Activated CD4-positive, alpha-beta T cell treated with anti-CD3 and anti-CD28 coated beads for 36 hours (primary cell): ENCODE measurements at regions of chr3 and their contacts with region 1.

Region 1: GRCh38 chr3:198080521-198081280 is 120.7 kb downstream of the LMLN start:
- DNase-seq: peak; percentile 90
- ATAC-seq: peak; percentile 80
- H3K4me3 Mint-ChIP-seq: peak overlapping the region; percentile 85
- H3K27ac Mint-ChIP-seq: peak overlapping the region; percentile 93
- H3K4me1 Mint-ChIP-seq: peaks cover 22% of the 10 kb centered on the region
- H3K27me3 Mint-ChIP-seq: peaks cover 40% of the 10 kb centered on the region

Region 2: DNA sequence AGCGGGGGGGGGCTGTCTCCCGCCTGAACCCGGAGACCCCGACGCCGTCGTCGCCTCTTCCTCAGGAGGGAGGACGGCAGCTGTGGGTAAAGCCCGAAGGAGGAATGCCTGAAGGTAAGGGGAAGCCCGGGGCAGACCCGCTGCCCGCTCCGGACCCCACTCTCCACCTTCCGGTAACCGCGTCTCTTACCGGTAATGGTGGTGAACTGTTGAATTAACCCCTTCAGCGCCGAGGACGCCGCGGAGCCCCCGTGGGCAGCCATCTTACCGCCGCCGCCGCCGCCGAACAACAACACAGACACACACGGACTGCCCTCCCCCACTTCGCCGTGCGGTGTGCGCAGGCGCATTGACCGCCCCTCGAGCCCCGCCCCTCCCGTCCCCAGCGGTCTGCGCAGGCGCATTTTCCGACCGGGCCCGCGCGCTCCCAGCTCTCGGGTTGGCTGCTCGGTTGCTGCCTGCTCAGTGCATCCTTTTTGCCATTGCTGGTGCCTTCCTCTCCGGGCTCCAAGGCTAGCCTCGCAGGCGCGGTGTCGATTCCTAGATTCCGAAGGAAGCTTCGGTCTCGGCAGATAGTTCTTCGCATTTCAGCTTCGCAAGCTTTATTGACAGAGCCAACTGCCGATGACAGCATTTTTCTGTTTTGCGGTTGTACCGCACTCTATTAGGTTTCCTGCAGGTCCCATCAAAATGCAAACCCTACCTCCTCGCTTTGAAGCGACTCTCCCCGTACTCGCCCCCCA is 1648.4 kb before region 1 on chr3 and contains the start of gene UBXN7:
- CTCF ChIA-PET with region 1: no interaction called
- POLR2A ChIA-PET with region 1: no interaction called
- intact Hi-C with region 1: no loop called
- DNase-seq: peak; percentile 98
- ATAC-seq: peak; percentile 89
- H3K4me3 Mint-ChIP-seq: peak within 1 kb of the TSS; percentile 79
- H3K27ac Mint-ChIP-seq: peak within 1 kb of the TSS; percentile 95
- H3K4me1 Mint-ChIP-seq: peaks cover 20% of the 10 kb centered on the region
- H3K27me3 Mint-ChIP-seq: no peaks in the 10 kb centered on the region
- total RNA-seq, gene UBXN7: 67.2 to 102 TPM

Region 3: GRCh38 chr3:197949754-197950660 is 130.7 kb before region 1 on chr3 and contains the start of gene RPL35A:
- CTCF ChIA-PET with region 1: interaction called, 3 read pairs
- POLR2A ChIA-PET with region 1: interaction called, 6 read pairs
- intact Hi-C with region 1: loop called in 1 of 2 experiments (anchors 1 kb)
- DNase-seq: peak; percentile 90
- ATAC-seq: peak; percentile 89
- H3K4me3 Mint-ChIP-seq: peak within 1 kb of the TSS; percentile 87
- H3K27ac Mint-ChIP-seq: peak within 1 kb of the TSS; percentile 97
- H3K4me1 Mint-ChIP-seq: peaks cover 47% of the 10 kb centered on the region
- H3K27me3 Mint-ChIP-seq: no peaks in the 10 kb centered on the region
- total RNA-seq, gene RPL35A: 1,121 to 1,734 TPM

Region 4: DNA sequence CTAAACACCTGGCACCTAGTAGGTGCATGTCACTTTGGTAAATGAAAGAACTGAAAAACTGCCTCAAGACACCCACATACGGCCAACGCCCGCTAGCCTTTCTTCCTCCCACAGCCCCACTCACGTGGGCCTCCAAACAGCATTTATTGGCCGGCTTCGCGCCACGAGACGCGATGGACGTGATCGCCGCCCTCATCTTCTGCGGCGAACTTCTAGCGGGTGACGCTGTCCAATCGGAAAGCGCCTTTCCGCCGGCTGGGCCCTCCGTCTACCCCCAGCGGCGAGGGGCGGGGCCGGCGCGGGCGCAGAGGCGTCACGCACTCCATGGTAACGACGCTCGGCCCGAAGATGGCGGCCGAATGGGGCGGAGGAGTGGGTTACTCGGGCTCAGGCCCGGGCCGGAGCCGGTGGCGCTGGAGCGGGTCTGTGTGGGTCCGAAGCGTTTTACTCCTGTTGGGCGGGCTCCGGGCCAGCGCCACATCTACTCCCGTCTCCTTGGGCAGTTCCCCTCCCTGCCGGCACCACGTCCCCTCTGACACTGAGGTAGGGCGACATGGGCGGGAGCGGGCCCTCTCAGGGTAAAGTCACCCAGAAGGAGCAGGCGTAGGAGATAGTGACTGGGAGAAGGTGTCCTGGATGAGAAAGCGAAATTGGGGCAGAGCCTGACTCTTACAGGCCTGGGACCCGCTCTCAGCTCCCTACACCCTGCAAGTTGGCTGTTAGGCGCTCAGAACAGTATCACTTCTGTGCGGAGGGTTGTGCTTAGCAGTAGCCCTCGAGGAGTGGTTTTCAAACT is 120.6 kb before region 1 on chr3 and contains the start of gene LMLN:
- CTCF ChIA-PET with region 1: no interaction called
- POLR2A ChIA-PET with region 1: interaction called, 3 read pairs
- intact Hi-C with region 1: loop called (anchors 1 kb)
- DNase-seq: peak; percentile 98
- ATAC-seq: peak; percentile 91
- H3K4me3 Mint-ChIP-seq: peak within 1 kb of the TSS; percentile 84
- H3K27ac Mint-ChIP-seq: peak within 1 kb of the TSS; percentile 96
- H3K4me1 Mint-ChIP-seq: peaks cover 52% of the 10 kb centered on the region
- H3K27me3 Mint-ChIP-seq: no peaks in the 10 kb centered on the region
- total RNA-seq, gene LMLN: 4.3 to 7.7 TPM

Region 5: GRCh38 chr3:198046120-198046857 is 34.4 kb before region 1 on chr3:
- CTCF ChIA-PET with region 1: interaction called, 13 read pairs
- POLR2A ChIA-PET with region 1: no interaction called
- intact Hi-C with region 1: loop called (anchors 1 to 5 kb)
- DNase-seq: no peak
- ATAC-seq: no peak
- H3K4me3 Mint-ChIP-seq: no peak overlapping the region
- H3K27ac Mint-ChIP-seq: no peak overlapping the region
- H3K4me1 Mint-ChIP-seq: no peaks in the 10 kb centered on the region
- H3K27me3 Mint-ChIP-seq: peaks cover 2% of the 10 kb centered on the region

Region 6: GRCh38 chr3:198062068-198062465 is 18.6 kb before region 1 on chr3:
- CTCF ChIA-PET with region 1: interaction called, 19 read pairs
- POLR2A ChIA-PET with region 1: no interaction called
- intact Hi-C with region 1: no loop called
- DNase-seq: no peak
- ATAC-seq: no peak
- H3K4me3 Mint-ChIP-seq: no peak overlapping the region
- H3K27ac Mint-ChIP-seq: no peak overlapping the region
- H3K4me1 Mint-ChIP-seq: peaks cover 22% of the 10 kb centered on the region
- H3K27me3 Mint-ChIP-seq: peaks cover 16% of the 10 kb centered on the region